HepG2 (cell line): ENCODE measurements at regions of chr9 and their contacts with region 1.

Region 1: GRCh38 chr9:6353851-6354686 is 25.9 kb downstream of the TPD52L3 start:
- DNase-seq: peak; percentile 61
- ATAC-seq: peak; percentile 97
- H3K4me3 ChIP-seq: no peak overlapping the region
- H3K27ac ChIP-seq: no peak overlapping the region
- H3K4me1 ChIP-seq: no peaks in the 10 kb centered on the region
- H3K27me3 ChIP-seq: peaks cover 1 to 4% of the 10 kb centered on the region in 2 experiments; a peak in 1 of 5 replicates
- CTCF ChIP-seq: peak; percentile 79
- EP300 ChIP-seq: no peak
- POLR2A ChIP-seq: no peak
- RAD21 ChIP-seq: peak; percentile 46; the same call in 1 of the 2 replicates

Region 2: DNA sequence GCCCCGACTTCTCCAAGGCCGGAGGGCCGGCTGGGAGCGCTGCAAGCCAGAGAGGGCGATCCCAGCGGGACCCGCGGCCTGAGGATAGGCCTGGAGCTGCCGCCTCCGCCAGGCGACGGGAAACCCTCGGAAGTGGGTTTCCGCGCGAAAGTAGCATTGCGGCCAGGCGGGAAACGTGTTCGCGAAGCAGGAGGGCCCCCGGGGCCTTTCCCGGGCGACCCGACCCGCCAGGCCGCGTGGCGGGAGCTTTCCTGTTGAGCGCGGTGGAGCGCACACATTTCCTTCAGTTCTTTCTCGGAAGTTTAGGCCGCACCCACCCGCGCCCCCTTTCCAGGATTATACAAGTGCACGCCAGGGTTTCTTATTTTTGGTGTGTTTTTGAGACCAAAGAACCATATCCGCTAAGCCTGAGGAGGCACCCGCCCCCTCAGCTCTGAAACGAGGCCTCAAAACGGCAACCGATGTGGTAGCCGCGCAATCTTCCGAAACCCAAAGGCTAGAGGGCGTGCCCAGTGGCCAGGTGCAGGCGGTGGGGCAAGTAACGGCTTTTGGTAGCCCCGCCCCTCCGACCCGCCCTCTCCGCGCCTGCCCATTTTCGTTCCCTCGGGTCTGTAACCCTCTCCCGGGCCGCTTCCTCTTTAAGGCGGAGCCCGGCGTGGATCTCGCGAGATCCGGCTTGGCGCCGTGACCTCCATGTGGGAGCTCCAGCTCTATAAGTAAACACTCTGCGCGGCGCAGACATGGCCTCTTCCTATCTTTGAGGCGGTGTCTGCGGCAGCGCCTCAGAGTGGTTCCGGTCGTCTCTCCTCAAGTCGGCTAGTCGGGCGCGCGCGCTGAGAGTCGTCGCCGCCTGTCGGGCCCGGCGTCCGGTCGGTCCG is 58.7 kb after region 1 on chr9 and contains the start of gene UHRF2:
- CTCF ChIA-PET with region 1: no interaction called
- POLR2A ChIA-PET with region 1: no interaction called
- in situ Hi-C with region 1: no loop called
- intact Hi-C with region 1: loop called (anchors 2 kb)
- DNase-seq: peak; percentile 94
- ATAC-seq: peak; percentile 96
- H3K4me3 ChIP-seq: peak within 1 kb of the TSS; percentile 86 to 91 (median 90)
- H3K27ac ChIP-seq: peak within 1 kb of the TSS; percentile 77
- H3K4me1 ChIP-seq: peaks cover 50% of the 10 kb centered on the region
- H3K27me3 ChIP-seq: no peaks in the 10 kb centered on the region; a peak in 1 of 5 replicates
- CTCF ChIP-seq: no peak
- EP300 ChIP-seq: 0 out of 4 replicates have a peak, but pooled peaks of 1 of the 2 experiments have one; percentile 24
- POLR2A ChIP-seq: peak; percentile 76 to 87
- RAD21 ChIP-seq: no peak
- total RNA-seq, gene UHRF2: 33.2 and 44.2 TPM in 2 replicates

Region 3: DNA sequence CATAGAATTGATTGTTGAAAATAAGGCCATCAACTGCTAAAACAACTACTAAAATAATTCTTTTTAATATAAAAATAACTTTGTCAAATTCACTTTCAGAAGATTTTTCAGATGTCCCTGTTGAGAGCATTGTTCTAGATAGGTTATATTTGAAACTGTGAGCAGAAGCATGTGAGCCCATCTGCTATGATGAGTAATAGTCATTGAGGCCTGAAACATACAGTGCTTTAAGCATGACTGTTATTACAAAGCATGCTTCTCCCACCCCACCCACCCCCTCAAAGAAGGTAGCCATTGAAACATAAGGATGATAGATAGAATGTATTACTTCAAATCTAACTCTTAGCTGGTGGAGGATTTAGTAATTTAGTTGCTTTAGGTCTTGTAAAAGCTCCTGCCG is 144.9 kb after region 1 on chr9:
- CTCF ChIA-PET with region 1: no interaction called
- POLR2A ChIA-PET with region 1: no interaction called
- in situ Hi-C with region 1: no loop called
- intact Hi-C with region 1: loop called (anchors 10 kb)
- DNase-seq: no peak
- ATAC-seq: no peak
- H3K4me3 ChIP-seq: no peak overlapping the region
- H3K27ac ChIP-seq: no peak overlapping the region
- H3K4me1 ChIP-seq: no peaks in the 10 kb centered on the region
- H3K27me3 ChIP-seq: no peaks in the 10 kb centered on the region
- CTCF ChIP-seq: no peak
- EP300 ChIP-seq: no peak
- POLR2A ChIP-seq: no peak
- RAD21 ChIP-seq: no peak

Region 4: DNA sequence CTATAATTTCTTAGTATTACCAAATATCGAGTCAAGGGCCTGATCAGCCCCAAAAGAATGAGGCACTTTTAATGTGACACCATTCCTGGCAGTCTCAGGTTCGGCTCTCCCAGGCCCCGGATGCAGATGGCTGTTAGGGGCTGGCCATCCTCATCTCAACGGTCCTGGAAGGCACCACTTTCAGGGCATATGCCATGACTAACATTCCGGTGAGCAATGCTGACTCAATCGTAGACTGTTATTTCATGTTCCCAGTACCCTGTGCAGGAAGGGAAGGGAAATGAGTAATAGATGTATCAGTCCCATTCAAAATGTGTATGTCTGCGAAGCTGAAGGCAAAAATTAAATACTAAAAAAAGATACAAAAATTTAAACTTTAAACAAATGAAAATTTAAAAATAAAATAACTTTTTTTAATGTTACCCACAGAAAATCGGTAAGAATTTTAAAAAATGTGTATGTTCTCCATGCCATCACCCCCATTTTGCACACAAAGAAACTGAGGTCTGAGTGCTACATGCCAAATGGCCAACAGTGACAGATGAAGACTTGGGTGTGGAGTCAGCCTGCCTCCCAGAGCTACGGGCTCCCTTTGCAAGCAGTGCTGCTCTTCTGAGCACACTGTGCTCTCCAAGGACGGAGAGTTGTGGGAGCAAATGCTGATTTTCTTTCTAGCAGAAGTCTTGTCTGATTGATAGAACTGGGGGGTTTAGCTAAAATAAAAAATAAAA is 212.5 kb after region 1 on chr9:
- CTCF ChIA-PET with region 1: interaction called, 8 read pairs
- POLR2A ChIA-PET with region 1: no interaction called
- in situ Hi-C with region 1: loop called (anchors 5 kb)
- intact Hi-C with region 1: no loop called
- DNase-seq: no peak
- ATAC-seq: no peak
- H3K4me3 ChIP-seq: no peak overlapping the region
- H3K27ac ChIP-seq: no peak overlapping the region
- H3K4me1 ChIP-seq: no peaks in the 10 kb centered on the region
- H3K27me3 ChIP-seq: no peaks in the 10 kb centered on the region
- CTCF ChIP-seq: no peak
- EP300 ChIP-seq: no peak
- POLR2A ChIP-seq: no peak
- RAD21 ChIP-seq: no peak